A673 (cell line): ENCODE measurements at regions of chr14 and their contacts with region 1.

Region 1: DNA sequence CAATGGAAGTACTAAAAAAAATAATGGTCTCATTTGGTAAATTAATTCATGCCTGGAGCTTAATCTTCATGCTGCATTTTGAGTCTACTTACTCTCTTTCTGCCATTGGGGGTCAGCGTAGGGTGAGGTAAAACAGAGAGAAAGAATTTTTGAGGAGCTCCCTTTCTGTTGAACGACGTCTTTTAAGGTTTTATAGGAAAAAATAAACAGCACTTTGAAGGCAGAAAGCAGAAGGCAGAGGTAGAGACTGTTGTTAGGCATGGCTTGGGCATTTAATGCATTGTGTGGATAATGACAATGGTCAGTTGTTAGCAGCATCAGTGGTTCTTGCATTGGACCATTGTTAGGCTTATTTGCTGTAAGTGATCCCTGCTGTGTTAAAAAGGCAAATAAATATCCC is 557.2 kb upstream of the STXBP6 start:
- DNase-seq: peak; percentile 51
- H3K4me3 ChIP-seq: no peak overlapping the region
- H3K27ac ChIP-seq: no peak overlapping the region
- H3K4me1 ChIP-seq: no peaks in the 10 kb centered on the region
- H3K27me3 ChIP-seq: no peaks in the 10 kb centered on the region
- CTCF ChIP-seq: peak; percentile 53; the same call in 1 of the 2 replicates

Region 2: GRCh38 chr14:26128931-26129671 is 521.9 kb after region 1 on chr14:
- CTCF ChIA-PET with region 1: interaction called, 5 read pairs
- POLR2A ChIA-PET with region 1: no interaction called
- intact Hi-C with region 1: loop called (anchors 10 kb)
- DNase-seq: peak; percentile 95
- H3K4me3 ChIP-seq: peak overlapping the region; percentile 11
- H3K27ac ChIP-seq: peak overlapping the region; percentile 93
- H3K4me1 ChIP-seq: peaks cover 59% of the 10 kb centered on the region
- H3K27me3 ChIP-seq: no peaks in the 10 kb centered on the region
- CTCF ChIP-seq: no peak